CD8-positive, alpha-beta T cell (primary cell): ENCODE measurements at regions of chr4 and their contacts with region 1.

Region 1: GRCh38 chr4:43846111-43846587 is 602.5 kb downstream of the KCTD8 start:
- DNase-seq: peak in 1 of 9 experiments; percentile 1
- ATAC-seq: no peak
- H3K4me3 ChIP-seq: no peak overlapping the region
- H3K4me3 Mint-ChIP-seq: no peak overlapping the region
- H3K27ac ChIP-seq: no peak overlapping the region
- H3K27ac Mint-ChIP-seq: no peak overlapping the region
- H3K4me1 ChIP-seq: no peaks in the 10 kb centered on the region
- H3K4me1 Mint-ChIP-seq: no peaks in the 10 kb centered on the region
- H3K27me3 ChIP-seq: no peaks in the 10 kb centered on the region
- H3K27me3 Mint-ChIP-seq: no peaks in the 10 kb centered on the region
- CTCF ChIP-seq: no peak

Region 2: GRCh38 chr4:42750091-42750490 is 1096.1 kb before region 1 on chr4:
- CTCF ChIA-PET with region 1: no interaction called
- POLR2A ChIA-PET with region 1: no interaction called
- intact Hi-C with region 1: no loop called
- DNase-seq: peak in 8 of 9 experiments; percentile 2 to 80 (median 48)
- ATAC-seq: peak; percentile 96
- H3K4me3 ChIP-seq: no peak overlapping the region
- H3K4me3 Mint-ChIP-seq: no peak overlapping the region
- H3K27ac ChIP-seq: no peak overlapping the region
- H3K27ac Mint-ChIP-seq: no peak overlapping the region
- H3K4me1 ChIP-seq: no peaks in the 10 kb centered on the region
- H3K4me1 Mint-ChIP-seq: peaks cover 2% of the 10 kb centered on the region
- H3K27me3 ChIP-seq: no peaks in the 10 kb centered on the region
- H3K27me3 Mint-ChIP-seq: no peaks in the 10 kb centered on the region
- CTCF ChIP-seq: peak; percentile 59

Region 3: GRCh38 chr4:43875655-43876054 is 29.5 kb after region 1 on chr4:
- CTCF ChIA-PET with region 1: no interaction called
- POLR2A ChIA-PET with region 1: no interaction called
- intact Hi-C with region 1: no loop called
- DNase-seq: no peak
- ATAC-seq: no peak
- H3K4me3 ChIP-seq: no peak overlapping the region
- H3K4me3 Mint-ChIP-seq: no peak overlapping the region
- H3K27ac ChIP-seq: no peak overlapping the region
- H3K27ac Mint-ChIP-seq: no peak overlapping the region
- H3K4me1 ChIP-seq: no peaks in the 10 kb centered on the region
- H3K4me1 Mint-ChIP-seq: no peaks in the 10 kb centered on the region
- H3K27me3 ChIP-seq: no peaks in the 10 kb centered on the region
- H3K27me3 Mint-ChIP-seq: no peaks in the 10 kb centered on the region
- CTCF ChIP-seq: no peak

Region 4: GRCh38 chr4:43886196-43886595 is 40.0 kb after region 1 on chr4:
- CTCF ChIA-PET with region 1: no interaction called
- POLR2A ChIA-PET with region 1: no interaction called
- intact Hi-C with region 1: loop called in 1 of 2 experiments (anchors 1 kb)
- DNase-seq: no peak
- ATAC-seq: no peak
- H3K4me3 ChIP-seq: no peak overlapping the region
- H3K4me3 Mint-ChIP-seq: no peak overlapping the region
- H3K27ac ChIP-seq: no peak overlapping the region
- H3K27ac Mint-ChIP-seq: no peak overlapping the region
- H3K4me1 ChIP-seq: no peaks in the 10 kb centered on the region
- H3K4me1 Mint-ChIP-seq: no peaks in the 10 kb centered on the region
- H3K27me3 ChIP-seq: no peaks in the 10 kb centered on the region
- H3K27me3 Mint-ChIP-seq: no peaks in the 10 kb centered on the region
- CTCF ChIP-seq: no peak

Region 5: GRCh38 chr4:44674471-44674870 is 828.3 kb after region 1 on chr4:
- CTCF ChIA-PET with region 1: no interaction called
- POLR2A ChIA-PET with region 1: no interaction called
- intact Hi-C with region 1: no loop called
- DNase-seq: no peak
- ATAC-seq: no peak
- H3K4me3 ChIP-seq: no peak overlapping the region
- H3K4me3 Mint-ChIP-seq: no peak overlapping the region
- H3K27ac ChIP-seq: no peak overlapping the region
- H3K27ac Mint-ChIP-seq: no peak overlapping the region
- H3K4me1 ChIP-seq: peaks cover 8% of the 10 kb centered on the region
- H3K4me1 Mint-ChIP-seq: peaks cover 12% of the 10 kb centered on the region
- H3K27me3 ChIP-seq: no peaks in the 10 kb centered on the region
- H3K27me3 Mint-ChIP-seq: peaks cover 6% of the 10 kb centered on the region
- CTCF ChIP-seq: no peak